ENCODE measurements at regions of chr15 and their contacts with region 1.

Region 1: DNA sequence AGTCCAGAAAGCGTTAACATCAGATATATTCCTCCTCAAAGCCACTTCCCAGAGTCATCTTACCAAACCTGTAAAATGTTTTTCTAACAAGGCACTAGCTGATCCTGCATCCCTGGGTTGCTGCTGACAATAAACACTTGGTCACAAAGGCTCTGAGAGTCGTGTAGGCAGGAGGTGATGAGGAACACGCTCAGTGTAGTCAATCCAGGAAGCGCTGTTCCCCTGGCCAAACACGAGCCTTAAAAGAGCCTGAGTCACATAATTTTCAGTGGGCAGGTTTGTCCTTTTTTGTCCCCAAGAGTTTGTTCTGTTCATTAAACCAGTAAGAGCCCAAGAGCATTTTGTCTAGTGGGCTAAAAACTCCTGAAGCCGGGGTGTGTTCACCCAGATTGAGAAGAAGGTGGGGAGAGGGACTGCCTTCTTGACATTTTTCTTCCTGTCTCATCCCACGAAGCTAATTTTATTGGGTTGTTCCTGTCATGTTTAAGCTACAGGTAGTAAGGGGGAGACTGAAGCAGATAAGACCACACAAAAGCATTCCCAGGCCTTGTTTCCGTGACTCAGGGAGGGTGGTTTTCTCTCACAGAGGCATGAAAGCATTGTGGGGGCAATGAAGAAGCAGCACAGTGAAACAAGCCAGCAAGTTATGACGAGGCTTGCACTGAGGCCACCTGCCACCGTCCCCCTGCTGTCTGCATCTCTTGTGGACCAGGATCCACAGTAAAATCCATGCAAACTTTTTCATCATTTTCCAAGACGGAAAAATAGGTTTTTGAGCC is 73.7 kb downstream of the FOXB1 start:
- DNase-seq: peak; percentile 64
- H3K4me3 Mint-ChIP-seq: no peak overlapping the region
- H3K27ac Mint-ChIP-seq: peak overlapping the region; percentile 61
- H3K4me1 Mint-ChIP-seq: peaks cover 39% of the 10 kb centered on the region
- H3K27me3 Mint-ChIP-seq: peaks cover 8% of the 10 kb centered on the region

Region 2: GRCh38 chr15:60115579-60116380 is 38.0 kb after region 1 on chr15:
- intact Hi-C with region 1: loop called (anchors 2 kb)
- DNase-seq: no peak
- H3K4me3 Mint-ChIP-seq: no peak overlapping the region
- H3K27ac Mint-ChIP-seq: peak overlapping the region; percentile 12
- H3K4me1 Mint-ChIP-seq: peaks cover 23% of the 10 kb centered on the region
- H3K27me3 Mint-ChIP-seq: peaks cover 12% of the 10 kb centered on the region

Region 3: GRCh38 chr15:60128000-60128376 is 50.2 kb after region 1 on chr15:
- intact Hi-C with region 1: loop called (anchors 2 kb)
- DNase-seq: no peak
- H3K4me3 Mint-ChIP-seq: peak overlapping the region; percentile 86
- H3K27ac Mint-ChIP-seq: peak overlapping the region; percentile 84
- H3K4me1 Mint-ChIP-seq: peaks cover 51% of the 10 kb centered on the region
- H3K27me3 Mint-ChIP-seq: peaks cover 12% of the 10 kb centered on the region